Activated B cell treated with CpG ODN at 0.5 μM for 24 hours (primary cell): ENCODE measurements at regions of chr7 and their contacts with region 1.

Region 1: DNA sequence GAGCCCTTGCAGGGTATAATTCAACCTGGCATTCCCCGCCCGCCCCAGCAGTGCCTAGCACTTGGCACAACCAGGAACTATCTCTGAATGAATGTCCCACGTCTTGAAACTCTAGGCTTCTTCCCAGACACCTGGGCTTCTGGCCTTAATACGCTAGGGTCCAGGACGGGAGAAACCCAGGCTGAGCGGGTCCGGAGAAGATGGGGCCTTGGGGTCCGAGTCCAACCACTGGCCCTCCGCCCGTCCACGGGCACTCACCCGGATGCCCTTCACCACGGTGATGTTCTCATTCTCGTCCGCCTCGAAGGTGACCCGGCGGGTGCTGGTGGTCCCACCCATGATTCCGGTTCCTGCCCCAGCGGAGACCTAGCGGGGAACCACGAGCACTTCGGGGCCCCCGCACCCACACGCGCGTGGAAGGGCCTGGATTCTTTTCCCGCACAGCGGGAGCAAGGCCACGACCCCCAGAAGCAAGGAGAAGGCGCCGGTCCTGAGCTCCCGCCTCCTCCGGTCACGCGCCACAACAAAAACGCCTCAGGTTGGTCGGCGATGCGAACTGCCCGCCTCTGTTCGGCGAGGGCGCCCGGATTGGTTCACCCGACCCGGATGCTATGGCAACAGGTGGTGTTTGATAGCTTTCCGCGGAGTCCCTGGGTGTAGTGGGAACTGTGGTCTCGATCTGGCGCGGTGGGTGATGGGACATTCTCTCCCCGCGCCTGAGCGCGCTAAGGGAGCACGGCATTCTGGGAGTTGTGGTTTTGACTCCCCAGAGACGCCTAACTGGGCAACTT is at the start of gene CHCHD3:
- DNase-seq: peak; percentile 91
- ATAC-seq: peak; percentile 98
- H3K4me3 Mint-ChIP-seq: peak within 1 kb of the TSS; percentile 94
- H3K27ac Mint-ChIP-seq: peak within 1 kb of the TSS; percentile 94
- H3K4me1 Mint-ChIP-seq: peaks cover 30% of the 10 kb centered on the region
- H3K27me3 Mint-ChIP-seq: no peaks in the 10 kb centered on the region
- CTCF ChIP-seq: no peak
- total RNA-seq, gene CHCHD3: 53.6 and 56.3 TPM in 2 replicates

Region 2: GRCh38 chr7:131562941-131563340 is 1518.9 kb before region 1 on chr7:
- CTCF ChIA-PET with region 1: no interaction called
- POLR2A ChIA-PET with region 1: no interaction called
- intact Hi-C with region 1: no loop called
- DNase-seq: no peak
- ATAC-seq: no peak
- H3K4me3 Mint-ChIP-seq: no peak overlapping the region
- H3K27ac Mint-ChIP-seq: no peak overlapping the region
- H3K4me1 Mint-ChIP-seq: no peaks in the 10 kb centered on the region
- H3K27me3 Mint-ChIP-seq: no peaks in the 10 kb centered on the region
- CTCF ChIP-seq: no peak

Region 3: GRCh38 chr7:132130497-132130896 is 951.3 kb before region 1 on chr7:
- CTCF ChIA-PET with region 1: no interaction called
- POLR2A ChIA-PET with region 1: no interaction called
- intact Hi-C with region 1: no loop called
- DNase-seq: no peak
- ATAC-seq: no peak
- H3K4me3 Mint-ChIP-seq: no peak overlapping the region
- H3K27ac Mint-ChIP-seq: no peak overlapping the region
- H3K4me1 Mint-ChIP-seq: no peaks in the 10 kb centered on the region
- H3K27me3 Mint-ChIP-seq: no peaks in the 10 kb centered on the region
- CTCF ChIP-seq: no peak

Region 4: GRCh38 chr7:132654150-132654549 is 427.6 kb before region 1 on chr7:
- CTCF ChIA-PET with region 1: no interaction called
- POLR2A ChIA-PET with region 1: no interaction called
- intact Hi-C with region 1: loop called (anchors 10 kb)
- DNase-seq: no peak
- ATAC-seq: peak; percentile 59
- H3K4me3 Mint-ChIP-seq: peak overlapping the region; percentile 40
- H3K27ac Mint-ChIP-seq: peak overlapping the region; percentile 60
- H3K4me1 Mint-ChIP-seq: peaks cover 39% of the 10 kb centered on the region
- H3K27me3 Mint-ChIP-seq: no peaks in the 10 kb centered on the region
- CTCF ChIP-seq: peak; percentile 27

Region 5: DNA sequence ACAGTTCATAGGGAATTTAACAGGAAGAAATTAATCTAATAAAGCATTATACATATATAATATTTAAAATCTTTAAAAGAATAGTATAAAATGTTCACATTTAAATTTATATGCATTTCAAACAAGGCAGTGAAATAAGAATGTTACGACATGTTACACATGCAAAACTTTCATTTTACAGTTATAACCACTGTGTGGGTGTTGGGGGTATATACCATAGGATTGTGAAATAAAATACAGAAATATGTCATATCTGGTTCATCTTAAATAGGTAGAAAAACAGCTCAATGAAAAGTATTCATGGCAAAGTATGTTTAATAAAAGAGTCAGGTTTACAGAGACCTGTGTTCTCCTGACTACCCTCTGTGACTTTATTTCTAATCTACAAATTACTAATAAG is 45.5 kb before region 1 on chr7:
- CTCF ChIA-PET with region 1: no interaction called
- POLR2A ChIA-PET with region 1: no interaction called
- intact Hi-C with region 1: loop called (anchors 5 kb)
- DNase-seq: no peak
- ATAC-seq: no peak
- H3K4me3 Mint-ChIP-seq: no peak overlapping the region
- H3K27ac Mint-ChIP-seq: no peak overlapping the region
- H3K4me1 Mint-ChIP-seq: peaks cover 13% of the 10 kb centered on the region
- H3K27me3 Mint-ChIP-seq: no peaks in the 10 kb centered on the region
- CTCF ChIP-seq: no peak

Region 6: DNA sequence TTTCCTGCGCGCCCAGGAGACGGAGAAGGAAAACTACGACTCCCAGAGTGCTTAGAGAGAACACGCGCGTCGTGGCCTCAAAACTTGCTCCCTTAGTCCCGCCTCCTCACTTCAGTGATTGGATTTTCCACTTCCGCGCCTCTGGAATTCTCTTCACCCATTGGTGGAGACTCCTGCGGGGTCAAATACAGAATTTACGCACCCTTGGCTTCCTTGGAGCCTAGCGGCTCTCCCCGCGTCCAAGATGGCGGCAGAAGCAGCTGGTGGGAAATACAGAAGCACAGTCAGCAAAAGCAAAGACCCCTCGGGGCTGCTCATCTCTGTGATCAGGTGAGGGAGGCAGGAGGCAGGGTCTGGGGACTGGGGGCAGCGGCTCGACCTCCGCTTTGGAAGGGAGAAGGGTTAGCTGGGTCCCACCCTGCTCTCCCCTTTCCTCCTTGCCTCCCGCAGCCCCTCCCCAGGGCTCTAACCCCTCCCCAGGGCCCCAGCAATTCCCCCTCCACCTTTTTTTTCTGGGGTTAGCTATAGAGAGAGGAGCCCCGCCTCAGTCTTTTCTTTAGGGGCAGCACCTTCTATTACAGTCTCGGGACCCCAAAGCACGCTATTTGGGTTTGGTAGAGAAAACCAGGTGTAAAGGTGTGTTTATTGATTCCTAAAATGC is 171.2 kb after region 1 on chr7 and contains the start of gene EXOC4:
- CTCF ChIA-PET with region 1: no interaction called
- POLR2A ChIA-PET with region 1: interaction called, 12 read pairs
- intact Hi-C with region 1: loop called (anchors 1 kb)
- DNase-seq: peak; percentile 67
- ATAC-seq: peak; percentile 100
- H3K4me3 Mint-ChIP-seq: peak within 1 kb of the TSS; percentile 95
- H3K27ac Mint-ChIP-seq: peak within 1 kb of the TSS; percentile 88
- H3K4me1 Mint-ChIP-seq: peaks cover 27% of the 10 kb centered on the region
- H3K27me3 Mint-ChIP-seq: no peaks in the 10 kb centered on the region
- CTCF ChIP-seq: no peak
- total RNA-seq, gene EXOC4: 89.1 and 103 TPM in 2 replicates